ENCODE measurements at regions of chr3 and their contacts with region 1.

Region 1: DNA sequence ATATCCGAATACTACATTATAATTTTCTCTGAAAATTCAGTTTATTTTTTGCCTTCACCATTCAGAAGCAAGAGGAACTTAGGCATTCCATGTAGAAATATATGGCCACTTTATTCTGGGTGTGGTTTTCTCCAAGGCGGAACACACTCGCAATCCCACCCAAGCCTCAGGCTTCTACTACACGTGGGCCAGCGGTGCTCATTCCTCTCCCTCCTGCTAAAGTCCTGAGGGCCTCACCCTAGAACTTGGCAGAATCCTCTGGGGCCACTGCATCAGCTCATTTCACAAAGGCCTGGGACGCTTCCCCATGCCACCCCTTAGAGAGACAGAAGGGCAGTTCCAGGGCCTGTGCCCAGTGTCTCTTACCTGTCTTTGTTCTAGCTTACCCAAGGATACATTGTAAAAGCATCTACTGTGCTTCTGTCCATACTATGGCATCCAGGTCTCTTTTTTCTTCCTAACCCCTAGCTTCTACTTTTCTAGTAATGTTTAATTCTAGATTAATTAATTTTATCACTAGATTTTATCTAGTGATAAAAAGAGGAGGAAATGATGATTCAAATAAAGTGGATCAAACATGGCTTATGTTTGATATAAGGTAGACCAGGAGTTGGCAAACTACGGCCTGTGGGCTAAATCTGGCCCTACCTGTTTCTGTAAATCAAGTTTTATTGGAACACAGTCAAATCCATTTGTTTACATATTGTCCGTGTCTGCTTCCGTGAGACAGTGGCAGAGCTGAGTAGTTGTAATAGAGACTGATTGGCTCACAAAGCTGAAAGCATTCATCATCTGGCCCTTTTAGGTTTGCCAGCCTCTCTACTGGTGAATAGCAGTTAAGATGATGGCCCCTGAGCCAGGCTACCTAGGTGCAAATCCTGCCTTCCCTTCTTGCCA is 29.8 kb downstream of the LARS2 start:
- DNase-seq: peak; percentile 93
- ATAC-seq: peak; percentile 97
- H3K4me3 ChIP-seq: no peak overlapping the region
- H3K27ac ChIP-seq: peak overlapping the region; percentile 47
- H3K4me1 ChIP-seq: peaks cover 15% of the 10 kb centered on the region
- H3K27me3 ChIP-seq: no peaks in the 10 kb centered on the region
- CTCF ChIP-seq: no peak

Region 2: DNA sequence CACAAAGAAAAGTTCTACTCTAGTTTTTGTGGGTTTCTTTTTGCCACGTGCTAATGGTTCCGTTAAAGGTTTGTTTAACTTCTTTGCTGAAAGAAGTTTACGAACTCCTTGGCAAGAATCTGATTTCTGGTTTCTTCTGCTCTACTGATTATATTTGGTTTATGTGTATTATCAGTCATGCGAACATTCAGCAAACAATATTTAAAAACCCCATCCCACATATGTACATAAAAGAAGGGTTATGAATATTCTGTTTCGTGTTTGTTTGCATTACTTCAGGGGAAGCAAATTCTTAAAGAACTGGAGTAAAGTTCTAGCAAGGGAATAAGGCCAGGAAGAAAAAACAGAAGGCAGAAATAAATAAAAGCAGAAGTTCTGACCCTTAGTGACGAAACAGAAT is 20.0 kb before region 1 on chr3:
- CTCF ChIA-PET with region 1: no interaction called
- POLR2A ChIA-PET with region 1: no interaction called
- intact Hi-C with region 1: loop called (anchors 1 kb)
- DNase-seq: peak; percentile 82
- ATAC-seq: peak; percentile 96
- H3K4me3 ChIP-seq: peak overlapping the region; percentile 16; the same call in 1 of the 2 replicates
- H3K27ac ChIP-seq: peak overlapping the region; percentile 70
- H3K4me1 ChIP-seq: peaks cover 16% of the 10 kb centered on the region
- H3K27me3 ChIP-seq: no peaks in the 10 kb centered on the region
- CTCF ChIP-seq: no peak

Region 3: GRCh38 chr3:45437383-45437782 is 19.2 kb after region 1 on chr3:
- CTCF ChIA-PET with region 1: no interaction called
- POLR2A ChIA-PET with region 1: no interaction called
- intact Hi-C with region 1: no loop called
- DNase-seq: peak; percentile 9
- ATAC-seq: peak; percentile 71
- H3K4me3 ChIP-seq: no peak overlapping the region
- H3K27ac ChIP-seq: no peak overlapping the region
- H3K4me1 ChIP-seq: no peaks in the 10 kb centered on the region
- H3K27me3 ChIP-seq: no peaks in the 10 kb centered on the region
- CTCF ChIP-seq: peak; percentile 47; the same call in 1 of the 2 replicates